ENCODE measurements at regions of chr11 and their contacts with region 1.

Region 1: DNA sequence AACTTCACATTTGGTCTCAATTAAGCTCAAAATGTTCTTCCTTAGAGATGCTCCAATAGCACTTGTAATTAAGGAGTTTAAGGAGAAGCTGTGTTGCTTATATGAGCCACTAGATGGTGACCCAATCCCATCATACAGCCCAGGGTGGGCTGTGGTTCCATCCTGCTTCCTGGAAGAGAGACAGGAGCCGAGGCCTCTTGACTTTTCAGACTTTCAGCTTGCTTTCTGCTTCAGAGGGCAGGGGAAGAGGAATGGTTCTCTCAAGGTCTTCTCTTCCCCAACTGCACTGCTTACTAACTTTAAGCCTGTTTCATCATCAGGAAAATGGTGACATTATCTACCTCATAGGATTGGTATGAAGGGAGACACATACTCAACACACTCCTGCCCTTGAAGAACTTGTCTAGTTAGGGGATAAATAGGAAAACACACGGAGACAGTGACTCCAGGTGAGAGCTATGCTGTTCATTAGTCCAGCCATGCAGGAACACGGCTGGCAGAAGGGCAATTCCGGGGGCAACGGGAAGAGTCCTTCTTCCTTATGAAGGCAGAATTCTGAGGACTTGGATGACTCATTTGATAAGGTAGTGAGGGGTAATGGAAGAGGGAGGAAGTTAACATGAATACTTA is 20.1 kb downstream of the TMEM218 start:
- DNase-seq: peak in 1 of 2 experiments; percentile 41
- H3K4me3 ChIP-seq: no peak overlapping the region
- H3K27ac ChIP-seq: no peak overlapping the region
- H3K4me1 ChIP-seq: peaks cover 2 to 12% (median 6%) of the 10 kb centered on the region in 4 experiments; a peak in 6 of 7 replicates
- H3K27me3 ChIP-seq: no peaks in the 10 kb centered on the region
- CTCF ChIP-seq: peak; percentile 38 to 94 (median 74)
- EP300 ChIP-seq: no peak
- POLR2A ChIP-seq: no peak
- RAD21 ChIP-seq: peak; percentile 100

Region 2: GRCh38 chr11:124970925-124971324 is 120.4 kb before region 1 on chr11:
- CTCF ChIA-PET with region 1: interaction called, 26 read pairs
- POLR2A ChIA-PET with region 1: no interaction called
- DNase-seq: no peak
- H3K4me3 ChIP-seq: no peak overlapping the region
- H3K27ac ChIP-seq: no peak overlapping the region
- H3K4me1 ChIP-seq: no peaks in the 10 kb centered on the region
- H3K27me3 ChIP-seq: no peaks in the 10 kb centered on the region
- CTCF ChIP-seq: peak in 2 of 3 experiments; percentile 36 to 48; a peak in 3 of 4 replicates
- EP300 ChIP-seq: no peak
- POLR2A ChIP-seq: no peak
- RAD21 ChIP-seq: peak; percentile 58 to 69

Region 3: GRCh38 chr11:125105926-125106325 is 14.6 kb after region 1 on chr11:
- CTCF ChIA-PET with region 1: interaction called, 247 read pairs
- POLR2A ChIA-PET with region 1: interaction called, 3 read pairs
- DNase-seq: no peak
- H3K4me3 ChIP-seq: 0 out of 8 replicates have a peak overlapping the region, but pooled peaks of 1 of the 4 experiments have one; percentile 10
- H3K27ac ChIP-seq: no peak overlapping the region
- H3K4me1 ChIP-seq: peaks cover 0 to 3% (median 3%) of the 10 kb centered on the region in 4 experiments; a peak in 4 of 7 replicates
- H3K27me3 ChIP-seq: no peaks in the 10 kb centered on the region
- CTCF ChIP-seq: no peak
- EP300 ChIP-seq: no peak
- POLR2A ChIP-seq: no peak
- RAD21 ChIP-seq: no peak

Region 4: GRCh38 chr11:125141686-125142535 is 50.5 kb after region 1 on chr11:
- CTCF ChIA-PET with region 1: interaction called, 148 read pairs
- POLR2A ChIA-PET with region 1: no interaction called
- DNase-seq: peak in 1 of 2 experiments; percentile 97
- H3K4me3 ChIP-seq: peak overlapping the region in 1 of 4 experiments; percentile 47; a peak in 2 of 8 replicates
- H3K27ac ChIP-seq: no peak overlapping the region
- H3K4me1 ChIP-seq: peaks cover 10 to 32% (median 25%) of the 10 kb centered on the region in 4 experiments
- H3K27me3 ChIP-seq: peaks cover 5 to 46% (median 35%) of the 10 kb centered on the region in 4 experiments
- CTCF ChIP-seq: peak; percentile 87 to 95 (median 89)
- EP300 ChIP-seq: no peak
- POLR2A ChIP-seq: no peak
- RAD21 ChIP-seq: peak; percentile 83 to 88

Region 5: GRCh38 chr11:125170510-125171031 is 79.2 kb after region 1 on chr11:
- CTCF ChIA-PET with region 1: interaction called, 15 read pairs
- POLR2A ChIA-PET with region 1: interaction called, 3 read pairs
- DNase-seq: no peak
- H3K4me3 ChIP-seq: peak overlapping the region in 1 of 4 experiments; percentile 7; a peak in 1 of 8 replicates
- H3K27ac ChIP-seq: no peak overlapping the region
- H3K4me1 ChIP-seq: peaks cover 19 to 50% (median 32%) of the 10 kb centered on the region in 4 experiments
- H3K27me3 ChIP-seq: peaks cover 14 to 43% (median 38%) of the 10 kb centered on the region in 4 experiments
- CTCF ChIP-seq: no peak
- EP300 ChIP-seq: no peak
- POLR2A ChIP-seq: no peak
- RAD21 ChIP-seq: no peak

Region 6: GRCh38 chr11:125404776-125405435 is 313.5 kb after region 1 on chr11:
- CTCF ChIA-PET with region 1: interaction called, 71 read pairs
- POLR2A ChIA-PET with region 1: no interaction called
- DNase-seq: peak in 1 of 2 experiments; percentile 97
- H3K4me3 ChIP-seq: no peak overlapping the region
- H3K27ac ChIP-seq: no peak overlapping the region
- H3K4me1 ChIP-seq: peaks cover 12 to 29% (median 17%) of the 10 kb centered on the region in 4 experiments
- H3K27me3 ChIP-seq: peaks cover 0 to 4% (median under 1%) of the 10 kb centered on the region in 4 experiments; a peak in 2 of 7 replicates
- CTCF ChIP-seq: peak; percentile 94 to 98 (median 96)
- EP300 ChIP-seq: no peak
- POLR2A ChIP-seq: no peak
- RAD21 ChIP-seq: peak; percentile 93 to 98

Region 7: GRCh38 chr11:125429166-125429707 is 337.9 kb after region 1 on chr11:
- CTCF ChIA-PET with region 1: interaction called, 103 read pairs
- POLR2A ChIA-PET with region 1: no interaction called
- DNase-seq: peak; percentile 58 to 90
- H3K4me3 ChIP-seq: no peak overlapping the region; a peak in 1 of 8 replicates
- H3K27ac ChIP-seq: no peak overlapping the region
- H3K4me1 ChIP-seq: peaks cover 0 to 12% (median 9%) of the 10 kb centered on the region in 4 experiments; a peak in 5 of 7 replicates
- H3K27me3 ChIP-seq: no peaks in the 10 kb centered on the region
- CTCF ChIP-seq: peak; percentile 82 to 96 (median 90)
- EP300 ChIP-seq: no peak
- POLR2A ChIP-seq: no peak
- RAD21 ChIP-seq: peak; percentile 94 to 95